ENCODE measurements at regions of chr19 and their contacts with region 1.

Region 1: GRCh38 chr19:18152444-18152816 is 533 bp upstream of the PIK3R2 start:
- DNase-seq: peak; percentile 97
- ATAC-seq: peak; percentile 70
- H3K4me3 Mint-ChIP-seq: peak overlapping the region; percentile 89
- H3K27ac Mint-ChIP-seq: peak overlapping the region; percentile 94
- H3K4me1 Mint-ChIP-seq: peaks cover 22% of the 10 kb centered on the region
- H3K27me3 Mint-ChIP-seq: no peaks in the 10 kb centered on the region
- CTCF ChIP-seq: no peak

Region 2: GRCh38 chr19:17938092-17938845 is 214.2 kb before region 1 on chr19:
- CTCF ChIA-PET with region 1: interaction called, 4 read pairs
- POLR2A ChIA-PET with region 1: interaction called, 3 read pairs
- intact Hi-C with region 1: loop called (anchors 2 kb)
- DNase-seq: peak; percentile 78
- ATAC-seq: peak; percentile 98
- H3K4me3 Mint-ChIP-seq: no peak overlapping the region
- H3K27ac Mint-ChIP-seq: no peak overlapping the region
- H3K4me1 Mint-ChIP-seq: peaks cover 10% of the 10 kb centered on the region
- H3K27me3 Mint-ChIP-seq: no peaks in the 10 kb centered on the region
- CTCF ChIP-seq: no peak

Region 3: GRCh38 chr19:18007044-18007916 is 145.2 kb before region 1 on chr19:
- CTCF ChIA-PET with region 1: no interaction called
- POLR2A ChIA-PET with region 1: interaction called, 8 read pairs
- intact Hi-C with region 1: loop called (anchors 1 kb)
- DNase-seq: peak; percentile 83
- ATAC-seq: peak; percentile 61
- H3K4me3 Mint-ChIP-seq: peak overlapping the region; percentile 93
- H3K27ac Mint-ChIP-seq: peak overlapping the region; percentile 92
- H3K4me1 Mint-ChIP-seq: peaks cover 40% of the 10 kb centered on the region
- H3K27me3 Mint-ChIP-seq: no peaks in the 10 kb centered on the region
- CTCF ChIP-seq: peak; percentile 84

Region 4: DNA sequence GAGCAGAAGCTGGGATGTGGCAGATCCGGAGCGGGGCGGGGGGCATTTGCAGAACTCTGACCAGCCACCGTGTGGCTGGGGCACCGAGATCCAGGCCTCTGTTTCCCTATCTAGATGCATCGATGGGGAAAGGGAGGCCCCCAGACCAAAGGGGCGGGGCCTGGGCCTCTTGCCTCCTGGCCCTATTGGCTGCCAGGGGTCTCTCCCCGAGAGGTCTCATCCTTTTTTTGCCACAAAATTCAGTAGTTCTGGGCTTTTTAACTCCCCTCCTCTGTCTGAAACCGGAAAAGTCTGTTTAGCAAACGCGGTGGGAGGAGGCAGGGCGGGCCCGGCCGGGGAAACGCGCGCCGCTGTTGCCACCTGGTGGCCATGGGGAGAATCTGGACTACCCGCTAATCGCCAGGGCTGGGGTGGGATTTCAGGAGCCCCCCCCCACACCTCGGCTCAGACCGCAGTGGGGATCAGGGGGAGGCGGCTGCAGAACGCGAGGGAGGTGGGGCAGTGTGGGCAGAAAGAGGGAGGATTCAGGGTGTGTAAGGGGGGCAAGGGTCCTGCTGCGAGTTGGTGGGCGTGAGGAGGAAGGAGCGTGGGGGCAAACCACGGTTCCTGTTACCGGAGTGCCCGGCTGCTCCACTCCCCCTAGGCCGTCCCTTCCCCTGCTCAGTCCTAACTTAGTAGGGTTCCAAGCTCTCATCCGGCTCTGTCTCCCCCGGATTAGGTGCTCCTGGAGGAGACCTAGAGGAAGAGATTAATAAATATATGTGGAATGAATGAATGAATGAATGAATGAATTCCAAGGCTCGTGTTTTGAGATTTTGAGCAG is 94.0 kb before region 1 on chr19:
- CTCF ChIA-PET with region 1: interaction called, 3 read pairs
- POLR2A ChIA-PET with region 1: interaction called, 3 read pairs
- intact Hi-C with region 1: loop called (anchors 2 kb)
- DNase-seq: peak; percentile 81
- ATAC-seq: peak; percentile 93
- H3K4me3 Mint-ChIP-seq: peak overlapping the region; percentile 58
- H3K27ac Mint-ChIP-seq: peak overlapping the region; percentile 76
- H3K4me1 Mint-ChIP-seq: peaks cover 21% of the 10 kb centered on the region
- H3K27me3 Mint-ChIP-seq: no peaks in the 10 kb centered on the region
- CTCF ChIP-seq: peak; percentile 88

Region 5: DNA sequence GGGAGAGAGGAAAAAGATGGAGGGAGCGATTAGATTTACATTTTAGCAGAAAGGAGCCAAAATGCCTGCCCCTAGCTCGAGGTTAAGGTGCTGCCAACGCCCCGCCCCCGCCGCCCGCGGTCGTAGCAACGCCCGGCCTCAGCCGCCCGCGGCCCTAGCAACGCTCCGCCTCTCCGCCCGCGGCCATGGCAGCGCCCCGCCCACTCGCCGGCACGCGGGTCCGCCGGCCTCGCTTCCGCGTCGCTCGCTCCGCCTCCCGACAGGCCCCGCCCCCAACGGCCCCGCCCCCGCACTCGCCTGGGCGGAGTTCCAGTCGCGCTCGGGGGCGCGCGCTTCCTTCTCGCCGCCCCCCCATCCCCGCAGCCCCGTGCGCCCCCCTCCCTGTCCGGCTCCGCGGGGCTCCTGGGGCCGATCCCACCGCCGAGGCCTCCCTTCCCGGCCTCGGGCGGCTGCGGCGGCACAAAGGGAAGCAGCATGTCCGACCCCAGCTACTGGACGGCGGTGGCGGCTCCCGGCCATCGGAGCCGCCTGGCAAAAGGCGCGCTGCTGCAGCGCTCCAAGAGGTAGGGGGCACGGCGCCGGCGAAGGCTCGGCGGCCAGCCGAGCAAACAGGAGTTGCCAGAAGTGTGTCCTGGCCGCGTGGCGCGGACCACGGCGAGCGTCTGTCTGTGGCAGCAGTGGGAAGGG is 34.6 kb before region 1 on chr19:
- CTCF ChIA-PET with region 1: interaction called, 18 read pairs
- POLR2A ChIA-PET with region 1: interaction called, 13 read pairs
- intact Hi-C with region 1: loop called (anchors 1 kb)
- DNase-seq: peak; percentile 98
- ATAC-seq: peak; percentile 93
- H3K4me3 Mint-ChIP-seq: peak overlapping the region; percentile 75
- H3K27ac Mint-ChIP-seq: peak overlapping the region; percentile 77
- H3K4me1 Mint-ChIP-seq: peaks cover 40% of the 10 kb centered on the region
- H3K27me3 Mint-ChIP-seq: no peaks in the 10 kb centered on the region
- CTCF ChIP-seq: no peak

Region 6: GRCh38 chr19:18173572-18174288 is 21.3 kb after region 1 on chr19 and contains the start of gene IFI30:
- CTCF ChIA-PET with region 1: no interaction called
- POLR2A ChIA-PET with region 1: interaction called, 20 read pairs
- intact Hi-C with region 1: loop called (anchors 1 kb)
- DNase-seq: peak; percentile 85
- ATAC-seq: peak; percentile 62
- H3K4me3 Mint-ChIP-seq: peak within 1 kb of the TSS; percentile 94
- H3K27ac Mint-ChIP-seq: peak within 1 kb of the TSS; percentile 92
- H3K4me1 Mint-ChIP-seq: peaks cover 90% of the 10 kb centered on the region
- H3K27me3 Mint-ChIP-seq: no peaks in the 10 kb centered on the region
- CTCF ChIP-seq: no peak
- total RNA-seq, gene IFI30: 251 and 255 TPM in 2 replicates